Panc1 (cell line): ENCODE measurements at regions of chr1 and their contacts with region 1.

Region 1: GRCh38 chr1:5953386-5953785 is 38.8 kb downstream of the NPHP4 start:
- DNase-seq: no peak
- ATAC-seq: no peak
- H3K4me3 ChIP-seq: no peak overlapping the region
- H3K27ac ChIP-seq: no peak overlapping the region
- H3K4me1 ChIP-seq: no peaks in the 10 kb centered on the region
- H3K27me3 ChIP-seq: no peaks in the 10 kb centered on the region
- CTCF ChIP-seq: no peak

Region 2: GRCh38 chr1:5704561-5705514 is 248.5 kb before region 1 on chr1:
- CTCF ChIA-PET with region 1: no interaction called
- POLR2A ChIA-PET with region 1: no interaction called
- in situ Hi-C with region 1: no loop called
- intact Hi-C with region 1: no loop called
- DNase-seq: no peak
- ATAC-seq: no peak
- H3K4me3 ChIP-seq: no peak overlapping the region
- H3K27ac ChIP-seq: no peak overlapping the region
- H3K4me1 ChIP-seq: no peaks in the 10 kb centered on the region
- H3K27me3 ChIP-seq: no peaks in the 10 kb centered on the region
- CTCF ChIP-seq: no peak

Region 3: DNA sequence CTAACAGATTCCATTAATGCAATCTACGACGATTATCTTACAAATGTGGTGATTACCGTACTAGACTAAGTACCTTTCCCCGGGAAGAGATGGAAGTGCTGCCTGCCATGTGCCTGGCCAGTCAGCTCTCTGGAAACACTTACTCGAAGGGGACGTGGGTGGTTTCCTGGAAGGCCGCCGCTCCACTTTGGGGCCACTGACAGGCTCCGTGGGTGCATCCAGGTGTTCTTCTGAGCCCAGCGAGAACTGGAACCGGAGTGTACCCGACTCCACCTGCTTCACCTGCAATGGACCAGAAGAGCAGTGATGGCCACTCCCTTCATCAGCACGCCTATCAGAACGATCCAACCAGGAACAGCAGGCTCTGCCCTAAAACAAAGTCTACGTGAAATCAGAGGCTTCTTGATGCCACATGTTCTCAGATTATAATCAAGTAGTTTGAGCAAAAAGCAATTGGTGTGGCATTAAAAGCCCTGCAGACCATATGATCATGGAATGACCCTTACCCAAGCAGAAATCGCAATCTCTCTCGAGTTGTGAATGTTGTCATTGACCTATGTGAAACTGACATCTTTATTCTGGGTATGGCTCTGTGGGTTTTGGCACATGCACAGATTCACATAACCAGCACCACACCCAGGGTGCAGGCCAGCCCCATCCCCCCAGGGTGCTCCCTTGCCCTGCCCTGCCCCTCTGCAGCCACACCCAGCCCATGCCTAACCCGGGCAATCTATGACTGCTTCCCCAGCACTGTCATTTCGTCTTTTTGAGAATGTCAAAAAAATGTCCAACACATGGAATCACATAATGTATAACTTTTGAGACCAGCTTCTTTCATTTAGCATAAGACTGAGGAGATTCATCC is 25.6 kb before region 1 on chr1:
- CTCF ChIA-PET with region 1: interaction called, 12 read pairs
- POLR2A ChIA-PET with region 1: no interaction called
- in situ Hi-C with region 1: no loop called
- intact Hi-C with region 1: no loop called
- DNase-seq: no peak
- ATAC-seq: no peak
- H3K4me3 ChIP-seq: no peak overlapping the region
- H3K27ac ChIP-seq: no peak overlapping the region
- H3K4me1 ChIP-seq: no peaks in the 10 kb centered on the region
- H3K27me3 ChIP-seq: no peaks in the 10 kb centered on the region
- CTCF ChIP-seq: no peak

Region 4: DNA sequence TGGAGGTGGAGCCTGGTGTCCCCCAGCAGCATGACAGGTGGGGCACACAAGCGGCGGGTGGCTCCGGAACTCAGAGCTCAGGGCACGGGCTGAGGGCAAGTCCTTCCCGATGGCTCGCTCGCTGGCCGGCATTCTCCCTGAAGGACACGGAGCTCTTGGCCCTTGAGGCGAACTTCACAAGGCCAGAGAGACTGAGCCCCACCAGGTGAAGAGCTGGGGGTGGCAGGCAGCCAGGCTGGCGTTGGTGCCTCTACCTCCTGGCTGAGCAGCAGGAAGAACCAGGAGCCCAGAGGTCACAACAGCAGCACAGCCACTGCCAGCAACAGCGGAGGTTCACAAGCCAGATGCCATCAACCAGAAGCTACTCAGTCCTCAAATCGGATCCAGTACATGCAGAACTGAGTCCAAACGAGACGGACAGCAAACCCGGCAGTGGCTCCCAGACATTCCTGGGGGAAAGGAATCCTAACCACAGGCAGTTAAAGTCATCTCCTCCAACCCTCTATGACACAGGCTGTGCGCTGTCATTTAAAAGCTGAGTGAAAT is 15.2 kb before region 1 on chr1:
- CTCF ChIA-PET with region 1: no interaction called
- POLR2A ChIA-PET with region 1: no interaction called
- in situ Hi-C with region 1: no loop called
- intact Hi-C with region 1: no loop called
- DNase-seq: no peak
- ATAC-seq: no peak
- H3K4me3 ChIP-seq: no peak overlapping the region
- H3K27ac ChIP-seq: no peak overlapping the region
- H3K4me1 ChIP-seq: no peaks in the 10 kb centered on the region
- H3K27me3 ChIP-seq: no peaks in the 10 kb centered on the region
- CTCF ChIP-seq: no peak

Region 5: GRCh38 chr1:6065093-6065858 is 111.9 kb after region 1 on chr1:
- CTCF ChIA-PET with region 1: no interaction called
- POLR2A ChIA-PET with region 1: no interaction called
- in situ Hi-C with region 1: no loop called
- intact Hi-C with region 1: no loop called
- DNase-seq: no peak
- ATAC-seq: no peak
- H3K4me3 ChIP-seq: no peak overlapping the region
- H3K27ac ChIP-seq: no peak overlapping the region
- H3K4me1 ChIP-seq: no peaks in the 10 kb centered on the region
- H3K27me3 ChIP-seq: no peaks in the 10 kb centered on the region
- CTCF ChIP-seq: no peak